ENCODE measurements at regions of chr18 and their contacts with region 1.

Region 1: GRCh38 chr18:52682260-52682659 is 342.3 kb downstream of the DCC start:
- DNase-seq: no peak
- ATAC-seq: no peak
- H3K4me3 ChIP-seq: no peak overlapping the region
- H3K27ac ChIP-seq: no peak overlapping the region
- H3K4me1 ChIP-seq: no peaks in the 10 kb centered on the region
- H3K27me3 ChIP-seq: peaks cover 0 to 4% (median 0%) of the 10 kb centered on the region in 7 donors
- CTCF ChIP-seq: no peak

Region 2: DNA sequence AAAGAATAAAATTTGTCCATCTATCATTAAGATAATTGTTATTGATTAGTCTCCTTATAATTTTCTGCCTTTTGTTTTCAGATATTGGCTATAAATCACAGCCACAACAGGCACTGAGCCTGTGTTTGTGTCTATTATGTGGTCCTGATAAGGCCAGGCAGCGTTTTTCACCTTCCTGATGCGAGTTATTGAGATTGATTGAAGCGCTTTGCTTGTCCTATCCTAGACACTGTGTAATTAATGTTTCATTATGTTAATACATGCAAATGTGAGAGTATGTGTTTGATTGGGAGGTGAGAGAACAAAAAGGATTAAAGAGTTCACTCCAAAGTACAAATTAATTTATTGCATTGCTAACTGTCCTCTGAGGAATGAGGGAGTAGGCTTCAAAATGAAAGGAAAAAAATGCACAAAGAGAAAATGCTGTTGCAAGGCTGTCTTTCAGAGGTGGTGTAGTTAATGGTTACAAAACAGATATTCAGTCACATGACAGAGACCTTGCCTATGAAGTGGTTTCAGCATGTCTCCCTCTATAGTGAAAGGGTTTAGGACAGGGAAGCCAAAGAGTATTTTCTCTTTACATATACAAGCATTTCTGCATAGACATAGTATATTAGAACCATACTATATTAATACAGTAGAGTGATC is 48.8 kb after region 1 on chr18:
- intact Hi-C with region 1: loop called in 1 of 10 experiments (anchors 5 kb)
- DNase-seq: no peak
- ATAC-seq: no peak
- H3K4me3 ChIP-seq: no peak overlapping the region
- H3K27ac ChIP-seq: no peak overlapping the region
- H3K4me1 ChIP-seq: no peaks in the 10 kb centered on the region
- H3K27me3 ChIP-seq: no peaks in the 10 kb centered on the region
- CTCF ChIP-seq: no peak

Measured in heart right ventricle (tissue), 16 donors.